Dorsolateral prefrontal cortex (tissue), 120 donors: ENCODE measurements at regions of chr3 and their contacts with region 1.

Region 1: DNA sequence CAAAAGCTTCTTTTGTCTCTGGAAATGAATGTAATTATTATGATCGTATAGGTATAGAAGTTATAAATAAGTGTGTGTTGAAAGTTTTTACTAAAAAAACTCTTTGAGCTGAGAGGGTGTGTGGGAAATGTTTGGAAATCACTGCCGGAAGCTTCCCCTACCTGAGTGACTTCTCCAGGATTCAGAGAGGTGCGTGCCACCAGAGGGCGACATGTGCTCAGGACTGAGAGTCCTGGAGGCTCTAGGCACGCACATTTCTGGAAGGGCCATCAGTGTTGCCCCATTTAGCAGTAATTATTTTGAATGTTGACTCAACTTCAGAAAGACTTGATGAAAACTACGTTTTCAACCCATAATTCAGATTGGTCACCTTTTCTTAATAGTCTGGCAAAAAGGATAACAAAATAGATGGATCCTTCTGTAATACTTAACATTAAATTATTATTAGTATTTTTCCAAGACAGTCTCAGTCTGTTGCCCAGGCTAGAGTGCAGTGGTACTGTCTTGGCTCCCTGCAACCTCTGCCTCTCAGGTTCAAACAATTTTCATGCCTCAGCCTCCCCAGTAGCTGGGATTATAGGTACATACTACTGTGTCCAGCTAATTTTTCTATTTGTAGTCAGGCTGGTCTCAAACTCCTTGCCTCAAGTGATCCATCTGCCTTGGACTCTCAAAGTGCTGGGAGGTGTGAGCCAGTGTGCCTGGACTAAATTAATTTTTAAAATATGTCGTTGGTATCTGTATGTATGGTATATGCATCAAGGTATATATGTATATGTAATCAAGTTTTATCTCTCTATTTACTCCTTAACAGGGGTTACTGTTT is 34.5 kb downstream of the GPR171 start:
- DNase-seq: peak; percentile 49 to 77 (median 67)
- H3K4me3 ChIP-seq: no peak overlapping the region
- H3K27ac ChIP-seq: no peak overlapping the region
- H3K27me3 ChIP-seq: no peaks in the 10 kb centered on the region
- CTCF ChIP-seq: peak; percentile 16 to 89 (median 72)

Region 2: GRCh38 chr3:151024339-151024738 is 144.1 kb before region 1 on chr3:
- intact Hi-C with region 1: no loop called
- DNase-seq: no peak
- H3K4me3 ChIP-seq: no peak overlapping the region
- H3K27ac ChIP-seq: no peak overlapping the region
- H3K27me3 ChIP-seq: peaks cover 0 to 6% (median 0%) of the 10 kb centered on the region in 45 donors
- CTCF ChIP-seq: no peak

Region 3: DNA sequence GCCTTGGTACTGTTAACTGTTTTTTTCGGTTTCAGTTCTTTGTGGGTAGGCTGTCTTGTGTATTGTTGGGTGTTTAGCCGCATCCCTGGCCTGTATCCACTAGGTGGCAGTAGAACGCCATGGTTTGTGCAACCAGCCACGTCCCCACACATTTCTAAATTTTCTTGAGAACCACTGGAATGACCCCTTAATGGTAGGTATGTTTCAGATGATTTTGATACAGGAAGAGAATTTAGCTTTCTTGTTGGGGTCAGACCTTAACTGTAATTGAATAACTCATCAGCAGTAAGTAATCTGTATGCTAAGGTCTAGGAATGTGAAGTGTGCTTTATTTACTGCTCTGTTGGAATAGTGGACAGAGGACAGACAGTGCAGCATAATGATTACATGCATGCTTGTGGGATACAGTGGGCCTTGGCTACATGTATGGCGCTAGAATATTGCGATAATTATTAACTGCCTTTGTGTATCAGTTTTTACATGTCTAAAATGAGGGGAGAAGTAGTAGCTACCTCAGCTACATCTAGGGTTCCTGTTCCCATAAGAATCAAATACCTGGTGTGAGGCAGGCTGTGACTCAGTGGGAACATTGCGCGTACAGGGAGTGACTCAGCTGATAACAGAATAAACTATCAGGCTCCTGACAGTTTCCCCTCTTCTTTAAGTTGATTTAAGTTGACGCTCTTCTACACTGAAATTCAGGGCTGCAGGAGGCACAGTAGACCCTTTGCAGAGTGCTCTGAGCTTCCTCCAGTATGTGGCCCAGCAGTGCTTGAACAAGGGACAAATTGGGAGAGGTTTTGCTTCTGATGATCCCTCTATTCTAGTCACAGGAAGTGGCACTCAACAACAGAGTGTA is 59.6 kb after region 1 on chr3:
- intact Hi-C with region 1: no loop called
- DNase-seq: peak; percentile 58 to 86 (median 74)
- H3K4me3 ChIP-seq: peak overlapping the region in 5 of 59 donors; percentile 6 to 26 (median 9)
- H3K27ac ChIP-seq: peak overlapping the region in 53 of 59 donors; percentile 11 to 76 (median 46)
- H3K27me3 ChIP-seq: no peaks in the 10 kb centered on the region
- CTCF ChIP-seq: peak; percentile 83 to 98 (median 93)

Region 4: GRCh38 chr3:151282921-151283320 is 114.4 kb after region 1 on chr3:
- intact Hi-C with region 1: loop called (anchors 2 to 5 kb)
- DNase-seq: no peak
- H3K4me3 ChIP-seq: no peak overlapping the region
- H3K27ac ChIP-seq: no peak overlapping the region
- H3K27me3 ChIP-seq: no peaks in the 10 kb centered on the region
- CTCF ChIP-seq: peak; percentile 64 to 94 (median 83)